AG04450 (cell line): ENCODE measurements at regions of chr14 and their contacts with region 1.

Region 1: DNA sequence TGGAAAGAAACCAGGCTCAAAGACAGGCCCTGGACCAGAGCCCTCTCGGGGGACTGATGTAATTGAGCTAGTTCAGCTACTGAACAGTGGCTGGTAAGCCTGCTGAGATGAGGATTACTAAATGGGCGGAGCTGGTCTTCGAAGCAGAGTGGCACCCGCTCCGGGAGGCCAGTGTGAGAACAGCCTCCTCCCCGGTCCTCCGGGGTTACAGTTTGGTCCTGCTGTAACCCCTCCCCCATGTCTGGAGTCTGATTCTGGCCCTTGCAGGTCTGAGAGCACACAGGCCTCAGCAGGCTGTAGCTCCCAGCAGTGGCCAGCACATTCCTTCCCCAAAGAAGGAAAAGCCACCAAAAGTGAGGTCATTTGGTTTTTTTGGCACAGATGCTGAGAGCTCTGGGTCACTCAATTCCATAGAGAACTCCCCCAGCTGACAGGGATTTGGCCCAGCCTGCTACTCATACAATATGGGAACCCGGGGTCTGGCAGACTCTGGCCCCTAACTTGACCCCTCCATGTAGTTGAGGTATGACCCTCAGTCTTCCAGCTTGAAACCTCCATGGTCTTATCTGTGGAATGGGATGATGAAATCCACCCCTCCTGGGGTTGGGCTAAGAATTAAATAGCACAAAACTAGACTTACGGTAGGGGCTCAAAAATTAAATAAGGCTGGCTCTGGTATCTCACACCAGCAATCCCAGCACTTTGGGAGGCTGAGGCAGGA is 39.0 kb downstream of the ACTN1 start:
- DNase-seq: peak; percentile 80
- H3K4me3 ChIP-seq: no peak overlapping the region
- H3K27ac ChIP-seq: peak overlapping the region; percentile 90
- H3K27me3 ChIP-seq: no peaks in the 10 kb centered on the region
- CTCF ChIP-seq: no peak

Region 2: DNA sequence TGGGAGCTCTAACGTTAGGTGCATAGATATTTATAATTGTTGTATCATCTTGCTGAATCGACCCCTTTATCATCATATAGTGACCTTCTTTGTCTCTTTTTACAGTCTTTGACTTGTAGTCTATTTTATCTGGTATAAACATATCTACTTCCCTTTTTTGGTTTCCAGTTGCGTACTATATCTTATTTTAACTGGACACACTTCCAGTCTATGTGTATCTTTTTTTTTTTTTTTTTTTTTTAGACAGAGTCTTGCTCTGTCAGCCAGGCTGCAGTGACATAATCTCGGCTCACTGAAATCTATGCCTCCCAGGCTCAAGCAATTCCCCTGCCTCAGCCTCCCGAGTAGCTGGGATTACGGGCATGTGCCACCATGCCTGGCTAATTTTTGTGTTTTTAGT is 105.2 kb before region 1 on chr14:
- CTCF ChIA-PET with region 1: no interaction called
- POLR2A ChIA-PET with region 1: interaction called, 14 read pairs
- DNase-seq: no peak
- H3K4me3 ChIP-seq: no peak overlapping the region
- H3K27ac ChIP-seq: no peak overlapping the region
- H3K27me3 ChIP-seq: no peaks in the 10 kb centered on the region
- CTCF ChIP-seq: no peak

Region 3: GRCh38 chr14:68951042-68951914 is 11.2 kb after region 1 on chr14:
- CTCF ChIA-PET with region 1: interaction called, 3 read pairs
- POLR2A ChIA-PET with region 1: interaction called, 17 read pairs
- DNase-seq: peak; percentile 81
- H3K4me3 ChIP-seq: peak overlapping the region; percentile 13; the same call in 1 of the 2 replicates
- H3K27ac ChIP-seq: peak overlapping the region; percentile 90
- H3K27me3 ChIP-seq: no peaks in the 10 kb centered on the region
- CTCF ChIP-seq: no peak

Region 4: GRCh38 chr14:69043596-69044260 is 103.7 kb after region 1 on chr14:
- CTCF ChIA-PET with region 1: no interaction called
- POLR2A ChIA-PET with region 1: no interaction called
- DNase-seq: no peak
- H3K4me3 ChIP-seq: no peak overlapping the region
- H3K27ac ChIP-seq: peak overlapping the region; percentile 4
- H3K27me3 ChIP-seq: no peaks in the 10 kb centered on the region
- CTCF ChIP-seq: no peak

Region 5: DNA sequence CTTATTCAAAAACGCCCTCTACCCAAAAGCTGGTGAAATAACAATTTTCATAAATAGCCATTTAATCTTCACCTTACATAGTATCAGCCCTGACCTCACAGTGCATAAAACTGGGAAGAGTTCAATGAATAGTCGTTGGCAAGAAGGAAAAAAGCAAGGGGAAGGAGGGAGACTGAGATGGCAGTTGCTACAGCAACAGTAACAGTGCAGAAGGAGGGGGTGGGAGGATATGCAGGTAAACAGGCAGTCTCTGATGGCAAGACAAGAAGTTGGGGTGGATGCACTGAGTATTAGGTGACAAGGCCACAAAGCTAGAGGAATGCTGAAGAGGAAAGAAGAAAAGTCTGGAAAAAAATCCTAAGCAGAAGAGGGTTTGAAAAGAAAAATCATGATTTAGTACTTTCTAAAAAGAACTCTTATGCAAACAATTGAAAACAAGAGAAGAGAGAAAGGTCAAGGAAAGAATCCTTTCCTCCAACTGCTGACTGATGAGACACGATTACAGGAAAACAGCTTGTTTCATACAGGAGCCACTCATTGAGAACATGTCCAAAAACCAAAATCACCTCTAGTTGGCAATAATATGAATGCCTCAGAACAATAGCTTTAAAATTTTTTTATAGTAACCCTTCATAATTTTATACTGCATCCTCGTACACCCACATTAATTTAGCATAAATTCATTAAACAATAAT is 156.9 kb after region 1 on chr14:
- CTCF ChIA-PET with region 1: no interaction called
- POLR2A ChIA-PET with region 1: no interaction called
- DNase-seq: no peak
- H3K4me3 ChIP-seq: no peak overlapping the region
- H3K27ac ChIP-seq: no peak overlapping the region
- H3K27me3 ChIP-seq: no peaks in the 10 kb centered on the region
- CTCF ChIP-seq: no peak